ENCODE measurements at regions of chr7 and their contacts with region 1.

Region 1: GRCh38 chr7:22488643-22489462 is 11.1 kb downstream of the STEAP1B start:
- DNase-seq: peak; percentile 25 to 44
- ATAC-seq: peak; percentile 66 to 69
- H3K4me3 ChIP-seq: no peak overlapping the region
- H3K27ac ChIP-seq: no peak overlapping the region
- H3K4me1 ChIP-seq: no peaks in the 10 kb centered on the region
- H3K27me3 ChIP-seq: no peaks in the 10 kb centered on the region
- CTCF ChIP-seq: peak; percentile 84 to 93 (median 89)
- POLR2A ChIP-seq: no peak

Region 2: DNA sequence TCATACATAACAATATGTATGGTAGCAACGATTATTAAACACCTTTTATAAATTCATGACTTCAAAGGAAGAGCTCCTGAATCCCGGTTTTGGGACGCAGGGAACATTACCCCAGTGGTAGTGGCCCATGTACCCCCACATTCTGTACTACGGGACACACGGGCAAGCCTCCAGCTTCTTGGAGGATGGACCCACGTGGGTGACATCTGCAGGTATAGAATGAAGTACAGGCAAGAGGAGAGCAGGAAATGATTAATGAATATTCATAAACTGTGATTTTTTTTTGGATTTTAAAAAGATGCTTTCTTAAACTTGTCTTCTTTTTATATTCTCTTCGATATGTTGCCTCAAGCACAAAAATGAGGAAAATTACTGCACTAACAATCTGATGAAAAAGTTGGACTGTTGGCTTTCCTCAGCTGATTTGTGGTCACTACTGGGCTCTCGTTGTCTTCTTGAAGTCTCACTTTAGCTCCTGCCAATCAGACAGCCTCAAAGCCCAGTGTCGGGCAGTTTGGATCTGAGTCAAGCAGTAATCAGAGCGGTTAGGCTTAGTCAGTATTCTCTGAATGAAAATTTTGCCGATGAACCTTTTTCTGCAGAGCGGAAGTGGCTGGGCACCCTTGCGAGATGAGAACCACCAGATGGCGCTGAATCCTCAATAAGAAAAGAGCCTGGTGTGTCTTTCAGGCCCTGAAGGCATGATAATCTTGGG is 385.4 kb before region 1 on chr7:
- in situ Hi-C with region 1: loop called (anchors 5 kb)
- intact Hi-C with region 1: loop called (anchors 2 kb)
- DNase-seq: peak; percentile 15 to 31
- ATAC-seq: peak in 1 of 2 donors; percentile 72
- H3K4me3 ChIP-seq: no peak overlapping the region
- H3K27ac ChIP-seq: no peak overlapping the region
- H3K4me1 ChIP-seq: peaks cover 0 to 3% of the 10 kb centered on the region in 2 donors
- H3K27me3 ChIP-seq: no peaks in the 10 kb centered on the region
- CTCF ChIP-seq: peak; percentile 40 to 70 (median 56)
- POLR2A ChIP-seq: no peak

Region 3: DNA sequence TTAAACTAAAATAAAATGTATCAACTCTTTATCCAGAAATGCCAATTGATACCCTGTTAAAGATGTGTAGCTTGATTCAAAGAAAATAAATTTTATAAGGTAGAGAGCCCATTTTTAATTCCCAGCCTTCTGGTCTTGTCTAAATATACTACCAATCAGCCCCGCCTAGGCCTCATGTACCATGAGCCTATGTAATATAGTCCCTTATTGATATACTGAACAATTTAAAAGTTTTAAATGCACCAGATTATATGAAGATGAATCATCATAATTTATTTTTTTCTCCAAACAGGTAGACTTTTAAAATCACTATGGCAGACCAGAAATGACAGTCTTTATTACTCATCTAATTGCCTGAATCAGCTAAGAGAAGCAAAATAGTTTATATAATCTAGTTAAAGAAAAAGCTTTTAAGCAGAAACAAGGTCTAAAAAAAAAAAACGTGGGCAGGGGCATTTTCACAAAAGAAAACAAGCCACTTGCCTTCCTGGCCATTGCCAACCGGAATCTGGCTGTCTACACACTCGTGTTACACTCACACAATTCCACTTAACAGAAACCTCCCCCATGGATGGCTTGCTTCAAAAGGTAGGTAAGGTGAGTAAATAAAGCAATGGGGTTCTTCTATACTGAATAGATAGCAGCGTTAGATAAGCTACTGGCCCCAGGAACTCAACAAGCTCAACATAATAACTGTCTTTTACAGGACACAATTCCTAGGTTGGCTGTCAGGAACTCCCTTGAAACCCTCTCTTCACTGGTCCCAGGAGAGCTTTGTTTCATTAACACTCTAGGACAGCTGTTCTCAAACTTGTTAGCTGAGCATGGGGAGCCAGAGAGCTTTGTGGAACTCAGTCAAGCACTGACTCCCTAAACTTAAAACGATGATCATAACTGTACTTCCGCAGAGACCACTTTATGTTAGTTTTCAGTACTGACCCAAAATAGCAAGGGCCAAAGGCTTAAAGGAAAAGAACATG is 169.1 kb before region 1 on chr7:
- in situ Hi-C with region 1: loop called in 1 of 4 experiments (anchors 25 kb)
- intact Hi-C with region 1: no loop called
- DNase-seq: no peak
- ATAC-seq: no peak
- H3K4me3 ChIP-seq: no peak overlapping the region
- H3K27ac ChIP-seq: no peak overlapping the region
- H3K4me1 ChIP-seq: no peaks in the 10 kb centered on the region
- H3K27me3 ChIP-seq: no peaks in the 10 kb centered on the region
- CTCF ChIP-seq: no peak
- POLR2A ChIP-seq: no peak

Region 4: GRCh38 chr7:22627136-22627535 is 138.3 kb after region 1 on chr7:
- in situ Hi-C with region 1: no loop called
- intact Hi-C with region 1: no loop called
- DNase-seq: no peak
- ATAC-seq: no peak
- H3K4me3 ChIP-seq: no peak overlapping the region
- H3K27ac ChIP-seq: no peak overlapping the region
- H3K4me1 ChIP-seq: no peaks in the 10 kb centered on the region
- H3K27me3 ChIP-seq: no peaks in the 10 kb centered on the region
- CTCF ChIP-seq: no peak
- POLR2A ChIP-seq: no peak

Measured in gastrocnemius medialis (tissue), 4 donors.